Posterior vena cava (tissue), 2 donors: ENCODE measurements at regions of chr6 and their contacts with region 1.

Region 1: GRCh38 chr6:127539272-127539671 is 20.1 kb upstream of the MTCL3 start:
- DNase-seq: no peak

Region 2: GRCh38 chr6:127302728-127303660 is 236.3 kb before region 1 on chr6:
- intact Hi-C with region 1: loop called (anchors 5 to 10 kb)
- DNase-seq: no peak

Region 3: GRCh38 chr6:127434651-127435050 is 104.6 kb before region 1 on chr6:
- intact Hi-C with region 1: no loop called
- DNase-seq: no peak

Region 4: DNA sequence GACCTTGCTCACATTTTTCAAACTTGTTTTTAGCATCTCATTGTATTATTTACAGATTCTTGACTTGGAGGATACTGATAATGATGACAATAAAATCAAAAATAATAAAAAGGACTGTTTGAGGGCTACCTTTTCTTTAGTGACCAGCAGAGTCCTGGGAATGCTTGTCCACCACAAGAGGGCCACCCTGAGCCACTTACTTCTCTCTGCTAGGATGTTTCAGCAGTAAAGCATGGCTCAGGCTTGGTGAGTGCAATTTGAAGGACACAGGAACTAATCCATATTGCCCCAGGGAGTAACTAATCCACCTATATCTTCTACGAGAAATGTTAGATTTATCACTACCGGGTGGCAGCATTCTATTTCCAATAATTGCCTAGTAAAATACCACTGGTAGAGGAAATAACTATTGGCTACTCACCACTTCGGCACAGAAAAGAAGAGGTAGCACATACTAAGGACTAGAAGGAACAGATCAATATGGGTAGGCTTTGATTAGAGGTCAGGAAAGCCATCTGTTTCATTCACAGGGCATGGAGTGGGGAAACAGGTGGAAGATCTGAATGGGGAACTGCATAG is 74.3 kb before region 1 on chr6:
- intact Hi-C with region 1: loop called in 1 of 2 experiments (anchors 10 kb)
- DNase-seq: peak; percentile 87

Region 5: GRCh38 chr6:127561660-127562059 is 22.4 kb after region 1 on chr6:
- intact Hi-C with region 1: no loop called
- DNase-seq: no peak

Region 6: DNA sequence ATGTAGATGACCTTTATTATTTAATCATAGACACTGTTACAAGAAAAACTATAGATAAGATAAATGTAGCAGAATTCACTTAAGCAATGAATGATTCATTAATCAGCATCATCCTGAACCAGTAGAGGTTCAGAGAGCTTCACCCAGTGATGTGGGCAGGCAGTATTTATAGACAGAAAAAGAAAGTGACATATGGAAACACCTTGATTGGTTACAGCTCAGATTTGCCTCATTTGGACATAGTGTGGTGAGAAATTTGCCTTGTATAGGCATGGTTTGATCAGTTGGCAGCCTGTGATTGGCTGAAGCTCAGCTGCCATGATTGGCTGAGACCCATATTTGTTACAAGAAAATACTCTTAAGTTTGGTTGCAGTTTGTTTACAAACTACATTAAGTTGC is 42.3 kb after region 1 on chr6:
- intact Hi-C with region 1: no loop called
- DNase-seq: no peak